Heart right ventricle (tissue), 16 donors: ENCODE measurements at regions of chr1 and their contacts with region 1.

Region 1: GRCh38 chr1:203117611-203118575 is 9.6 kb upstream of the ADORA1 start:
- DNase-seq: peak; percentile 65 to 81
- ATAC-seq: peak; percentile 92 to 97 (median 94)
- H3K4me3 ChIP-seq: no peak overlapping the region
- H3K27ac ChIP-seq: no peak overlapping the region
- H3K4me1 ChIP-seq: peaks cover 0 to 12% (median 6%) of the 10 kb centered on the region in 9 donors
- H3K27me3 ChIP-seq: peaks cover 0 to 70% (median 39%) of the 10 kb centered on the region in 7 donors
- CTCF ChIP-seq: peak; percentile 49 to 88 (median 81)

Region 2: GRCh38 chr1:203172128-203173010 is 54.5 kb after region 1 on chr1:
- intact Hi-C with region 1: loop called (anchors 1 to 5 kb)
- DNase-seq: peak; percentile 56
- ATAC-seq: peak; percentile 57 to 82 (median 72)
- H3K4me3 ChIP-seq: no peak overlapping the region
- H3K27ac ChIP-seq: no peak overlapping the region
- H3K4me1 ChIP-seq: peaks cover 0 to 16% (median 0%) of the 10 kb centered on the region in 9 donors
- H3K27me3 ChIP-seq: peaks cover 0 to 4% (median 0%) of the 10 kb centered on the region in 7 donors
- CTCF ChIP-seq: peak; percentile 62 to 87 (median 80)

Region 3: GRCh38 chr1:203210990-203211389 is 93.1 kb after region 1 on chr1:
- intact Hi-C with region 1: loop called (anchors 1 to 5 kb)
- DNase-seq: no peak
- ATAC-seq: no peak
- H3K4me3 ChIP-seq: no peak overlapping the region
- H3K27ac ChIP-seq: no peak overlapping the region
- H3K4me1 ChIP-seq: peaks cover 0 to 9% (median 0%) of the 10 kb centered on the region in 9 donors
- H3K27me3 ChIP-seq: peaks cover 0 to 2% (median 0%) of the 10 kb centered on the region in 7 donors
- CTCF ChIP-seq: no peak

Region 4: GRCh38 chr1:203216274-203217138 is 98.6 kb after region 1 on chr1:
- intact Hi-C with region 1: loop called (anchors 1 to 5 kb)
- DNase-seq: peak in 1 of 2 donors; percentile 58
- ATAC-seq: peak; percentile 55 to 88 (median 76)
- H3K4me3 ChIP-seq: no peak overlapping the region
- H3K27ac ChIP-seq: no peak overlapping the region
- H3K4me1 ChIP-seq: peaks cover 0 to 15% (median 0%) of the 10 kb centered on the region in 9 donors
- H3K27me3 ChIP-seq: peaks cover 0 to 16% (median 11%) of the 10 kb centered on the region in 7 donors
- CTCF ChIP-seq: peak; percentile 75 to 91 (median 82)

Region 5: DNA sequence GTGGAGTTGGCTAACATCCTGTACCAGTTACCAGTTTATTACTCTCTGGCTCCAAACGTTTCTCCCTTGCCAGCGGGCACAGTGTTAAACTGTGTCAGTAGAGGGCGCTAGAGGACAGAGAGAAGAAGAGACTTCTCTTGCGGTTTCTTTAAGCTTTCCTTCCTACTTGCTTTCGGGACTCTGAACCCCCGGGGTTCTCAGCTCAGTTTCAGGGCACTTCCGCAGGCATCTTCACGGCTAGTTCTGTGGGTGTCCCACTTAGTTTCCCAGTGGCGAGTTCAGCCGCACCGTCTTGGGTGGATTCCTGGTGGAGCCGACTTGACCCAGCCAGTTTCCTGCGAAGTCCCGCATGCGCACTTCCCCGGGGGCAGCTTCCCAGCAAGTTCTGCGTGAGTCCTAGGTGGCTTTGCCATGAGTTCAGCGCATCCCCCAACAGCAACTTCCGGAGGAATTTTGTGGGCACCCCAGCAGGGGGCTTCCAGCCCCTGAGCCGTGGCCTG is 149.5 kb after region 1 on chr1:
- intact Hi-C with region 1: loop called in 1 of 10 experiments (anchors 1 kb)
- DNase-seq: peak; percentile 83 to 87
- ATAC-seq: peak; percentile 60 to 83 (median 74)
- H3K4me3 ChIP-seq: peak overlapping the region in 9 of 10 donors; percentile 37 to 65 (median 59)
- H3K27ac ChIP-seq: peak overlapping the region; percentile 28 to 92 (median 82)
- H3K4me1 ChIP-seq: peaks cover 3 to 25% (median 15%) of the 10 kb centered on the region in 9 donors
- H3K27me3 ChIP-seq: no peaks in the 10 kb centered on the region
- CTCF ChIP-seq: peak; percentile 85 to 99 (median 95)